Posterior vena cava (tissue), 2 donors: ENCODE measurements at regions of chr7 and their contacts with region 1.

Region 1: DNA sequence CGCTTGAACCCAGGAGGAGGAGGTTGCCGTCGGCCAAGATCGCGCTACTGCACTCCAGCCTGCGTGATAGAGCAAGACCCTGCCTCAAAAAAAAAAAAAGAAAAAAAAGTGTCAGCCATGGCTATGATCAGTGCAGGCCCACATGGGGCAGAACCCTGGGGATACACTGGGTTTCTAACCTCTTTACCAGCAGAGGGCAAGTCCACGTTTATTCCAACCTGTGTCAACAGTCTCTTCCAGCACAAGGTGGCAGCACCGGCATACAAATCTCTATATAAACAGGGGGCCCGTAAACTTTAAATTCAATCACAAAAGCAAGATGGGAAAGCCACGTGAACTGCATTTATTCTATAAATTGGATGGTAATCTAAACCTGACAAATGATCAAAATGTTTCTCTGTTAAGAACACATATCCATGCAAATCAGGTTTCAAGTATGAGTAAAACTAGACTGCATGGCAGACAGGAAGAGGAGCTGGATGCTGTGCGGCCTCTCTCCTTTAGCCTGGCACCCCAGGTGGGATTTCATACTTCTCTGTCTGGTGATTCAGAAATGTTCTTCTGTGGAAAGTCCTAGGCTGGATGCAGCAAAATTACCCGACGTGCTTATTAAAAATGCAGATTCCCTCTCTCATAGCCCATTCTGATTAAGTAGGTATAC is 60.0 kb upstream of the STEAP1B start:
- DNase-seq: peak; percentile 89

Region 2: GRCh38 chr7:22726345-22727185 is 166.6 kb after region 1 on chr7:
- intact Hi-C with region 1: loop called (anchors 5 kb)
- DNase-seq: peak; percentile 85

Region 3: DNA sequence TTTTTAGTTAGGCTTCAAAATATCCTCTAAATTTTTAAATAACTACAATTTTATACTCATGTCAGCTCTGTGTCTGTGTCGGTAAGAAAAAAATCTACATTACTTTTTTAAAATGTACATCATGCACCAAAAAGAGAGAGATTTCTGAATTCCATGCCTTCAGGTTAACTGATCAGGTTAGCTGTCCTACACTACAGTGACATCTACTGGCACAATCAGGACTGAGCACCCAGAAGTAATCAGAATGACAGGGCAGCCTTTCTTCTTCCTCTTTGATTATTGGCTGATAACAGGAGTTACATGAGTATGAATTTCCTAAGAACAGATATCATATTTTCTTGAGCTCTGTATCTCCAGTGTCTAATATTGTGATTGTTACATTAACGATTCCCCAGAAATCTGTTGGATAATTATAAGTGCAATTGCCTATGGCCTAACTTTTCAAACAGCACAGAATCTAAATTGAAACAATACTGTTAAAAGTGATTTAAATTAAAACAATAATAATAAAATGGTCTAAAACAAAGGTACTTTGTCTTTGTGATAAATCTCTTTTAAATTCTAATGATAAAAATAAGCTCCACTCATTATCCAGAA is 495.7 kb after region 1 on chr7:
- intact Hi-C with region 1: loop called in 1 of 2 experiments (anchors 5 kb)
- DNase-seq: no peak

Region 4: GRCh38 chr7:23175938-23176337 is 616.0 kb after region 1 on chr7:
- intact Hi-C with region 1: loop called in 1 of 2 experiments (anchors 5 kb)
- DNase-seq: no peak